ENCODE measurements at regions of chr2 and their contacts with region 1.

Region 1: GRCh38 chr2:174901075-174901474 is 104.1 kb downstream of the CHN1 start:
- DNase-seq: no peak
- H3K4me3 ChIP-seq: no peak overlapping the region
- CTCF ChIP-seq: no peak

Region 2: GRCh38 chr2:176096986-176097819 is 1196.1 kb after region 1 on chr2:
- in situ Hi-C with region 1: loop called (anchors 25 kb)
- DNase-seq: peak; percentile 27
- H3K4me3 ChIP-seq: peak overlapping the region; percentile 17
- CTCF ChIP-seq: peak; percentile 81

Measured in astrocyte of the cerebellum (primary cell).